ENCODE measurements at regions of chr5 and their contacts with region 1.

Region 1: DNA sequence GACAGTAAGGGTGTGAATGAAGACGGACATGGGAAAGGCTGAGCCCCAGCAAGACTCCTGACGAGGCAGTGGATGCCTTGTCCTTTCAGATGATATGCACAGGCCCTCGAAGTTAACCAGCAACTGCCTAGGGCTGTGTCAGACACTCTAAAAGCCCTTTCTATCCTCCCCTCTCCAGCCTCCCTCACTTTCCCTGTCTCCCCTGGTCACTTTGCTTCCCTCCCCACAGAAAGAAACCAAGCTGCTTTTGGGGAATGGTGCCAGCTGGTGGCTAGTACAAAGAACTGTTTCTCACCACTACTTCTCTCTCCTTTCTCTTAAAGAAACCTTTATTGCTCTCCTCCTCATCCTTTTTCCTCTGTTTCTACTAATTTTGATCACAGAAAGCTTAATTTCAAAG is 21.4 kb downstream of the LHFPL2 start:
- DNase-seq: no peak
- ATAC-seq: 0 out of 2 replicates have a peak, but pooled peaks have one; percentile 16
- H3K4me3 ChIP-seq: no peak overlapping the region
- H3K27ac ChIP-seq: no peak overlapping the region
- H3K4me1 ChIP-seq: peaks cover 17% of the 10 kb centered on the region
- H3K27me3 ChIP-seq: no peaks in the 10 kb centered on the region
- CTCF ChIP-seq: peak; percentile 48
- POLR2A ChIP-seq: no peak
- RAD21 ChIP-seq: peak; percentile 65

Region 2: GRCh38 chr5:78320401-78320800 is 306.8 kb before region 1 on chr5:
- CTCF ChIA-PET with region 1: no interaction called
- POLR2A ChIA-PET with region 1: no interaction called
- dilution Hi-C with region 1: no loop called
- in situ Hi-C with region 1: no loop called
- intact Hi-C with region 1: loop called (anchors 10 kb)
- DNase-seq: peak; percentile 69
- ATAC-seq: peak; percentile 91
- H3K4me3 ChIP-seq: no peak overlapping the region
- H3K27ac ChIP-seq: no peak overlapping the region
- H3K4me1 ChIP-seq: no peaks in the 10 kb centered on the region
- H3K27me3 ChIP-seq: no peaks in the 10 kb centered on the region
- CTCF ChIP-seq: peak; percentile 71
- POLR2A ChIP-seq: no peak
- RAD21 ChIP-seq: peak; percentile 79

Region 3: DNA sequence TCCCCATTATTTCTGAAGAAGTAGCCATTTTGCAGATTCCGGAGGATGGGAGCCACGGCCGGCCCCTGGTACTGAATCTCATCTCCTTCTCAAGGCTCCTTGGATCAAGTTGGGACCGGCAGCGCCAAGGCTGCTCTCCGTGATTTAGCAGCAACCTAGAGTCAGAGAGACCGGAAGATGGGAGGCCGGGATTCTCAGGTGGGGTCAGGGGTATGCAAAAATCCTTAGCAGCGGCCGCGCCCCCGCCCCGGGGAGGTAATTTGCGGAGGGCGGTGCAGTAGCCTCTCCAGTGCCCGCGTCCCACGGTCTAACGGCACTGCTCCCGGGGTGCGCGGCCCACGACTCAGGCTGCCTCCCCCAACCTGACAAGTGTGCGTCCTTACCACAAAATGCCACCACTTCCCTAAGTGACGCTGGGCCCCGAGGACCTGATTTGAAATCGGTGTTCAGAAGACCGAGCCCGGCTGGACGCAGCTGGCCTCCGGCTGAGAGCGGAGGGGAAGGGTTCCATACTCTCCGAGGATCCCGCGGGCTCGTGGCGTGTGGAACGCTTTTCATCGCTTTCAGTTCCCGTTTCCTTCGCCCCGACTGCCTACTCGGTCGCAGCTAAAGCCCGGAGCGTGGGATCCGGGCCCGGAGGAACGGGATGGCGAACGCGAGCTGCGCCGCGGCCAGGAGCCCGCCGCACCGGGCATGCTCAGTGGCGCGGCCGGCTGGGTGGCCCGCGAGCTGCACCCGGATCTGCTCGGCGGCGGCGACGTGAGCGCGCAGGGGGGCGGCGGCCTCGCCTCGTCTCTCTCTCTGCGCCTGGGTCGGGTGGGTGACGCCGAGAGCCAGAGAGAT is 267.1 kb before region 1 on chr5 and contains the start of gene SCAMP1:
- CTCF ChIA-PET with region 1: no interaction called
- POLR2A ChIA-PET with region 1: no interaction called
- dilution Hi-C with region 1: no loop called
- in situ Hi-C with region 1: no loop called
- intact Hi-C with region 1: loop called (anchors 5 kb)
- DNase-seq: peak; percentile 92
- ATAC-seq: peak; percentile 96
- H3K4me3 ChIP-seq: peak within 1 kb of the TSS; percentile 88
- H3K27ac ChIP-seq: peak within 1 kb of the TSS; percentile 89
- H3K4me1 ChIP-seq: no peaks in the 10 kb centered on the region
- H3K27me3 ChIP-seq: no peaks in the 10 kb centered on the region
- CTCF ChIP-seq: peak; percentile 38
- POLR2A ChIP-seq: peak; percentile 73; the same call in 1 of the 2 replicates
- RAD21 ChIP-seq: peak; percentile 40
- total RNA-seq, gene SCAMP1: 89.4 and 114 TPM in 2 replicates

Region 4: DNA sequence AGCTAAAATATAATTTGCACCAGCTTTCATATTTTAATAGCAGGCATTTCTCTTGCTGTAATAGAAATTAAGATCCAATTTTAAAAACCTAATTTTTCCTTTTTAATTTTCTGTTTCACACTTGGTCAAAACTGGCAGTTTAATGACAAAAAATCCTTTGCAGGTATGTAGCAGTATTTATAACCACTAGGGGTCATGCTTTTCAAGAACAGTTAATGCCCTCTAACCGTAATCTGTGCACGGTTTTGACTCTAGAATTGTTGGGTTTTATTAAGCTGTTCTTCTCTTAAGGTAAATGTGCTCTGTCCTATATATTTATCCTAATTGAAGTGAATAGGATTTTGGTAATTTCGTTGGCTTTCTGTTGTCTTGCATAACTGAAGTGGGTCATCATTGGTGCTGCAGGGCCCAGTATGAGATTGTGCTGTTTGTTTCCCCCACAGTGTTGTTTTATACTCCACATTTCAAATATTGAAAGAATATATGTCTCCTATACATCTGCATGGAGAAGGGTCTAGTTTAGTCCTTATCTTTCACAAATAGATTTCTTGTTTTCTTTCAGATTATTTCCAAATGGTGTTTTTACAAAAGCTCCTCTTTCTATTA is 159.3 kb before region 1 on chr5:
- CTCF ChIA-PET with region 1: interaction called, 4 read pairs
- POLR2A ChIA-PET with region 1: no interaction called
- dilution Hi-C with region 1: no loop called
- in situ Hi-C with region 1: no loop called
- intact Hi-C with region 1: loop called (anchors 5 kb)
- DNase-seq: peak; percentile 74
- ATAC-seq: peak; percentile 86
- H3K4me3 ChIP-seq: no peak overlapping the region
- H3K27ac ChIP-seq: no peak overlapping the region
- H3K4me1 ChIP-seq: no peaks in the 10 kb centered on the region
- H3K27me3 ChIP-seq: no peaks in the 10 kb centered on the region
- CTCF ChIP-seq: peak; percentile 75
- POLR2A ChIP-seq: no peak
- RAD21 ChIP-seq: peak; percentile 79

Measured in IMR-90 (cell line).